ENCODE measurements at regions of chr15 and their contacts with region 1.

Region 1: GRCh38 chr15:90789462-90789861 is 72.3 kb downstream of the BLM start:
- DNase-seq: no peak
- ATAC-seq: no peak
- H3K4me3 ChIP-seq: no peak overlapping the region
- H3K27ac ChIP-seq: no peak overlapping the region
- H3K4me1 ChIP-seq: no peaks in the 10 kb centered on the region
- H3K27me3 ChIP-seq: no peaks in the 10 kb centered on the region
- CTCF ChIP-seq: no peak

Region 2: GRCh38 chr15:91660174-91660653 is 870.8 kb after region 1 on chr15:
- CTCF ChIA-PET with region 1: interaction called, 17 read pairs
- POLR2A ChIA-PET with region 1: no interaction called
- in situ Hi-C with region 1: no loop called
- intact Hi-C with region 1: no loop called
- DNase-seq: no peak
- ATAC-seq: no peak
- H3K4me3 ChIP-seq: no peak overlapping the region
- H3K27ac ChIP-seq: no peak overlapping the region
- H3K4me1 ChIP-seq: no peaks in the 10 kb centered on the region
- H3K27me3 ChIP-seq: peaks cover 2% of the 10 kb centered on the region; the same call in 1 of the 2 replicates
- CTCF ChIP-seq: no peak